Activated naive CD4-positive, alpha-beta T cell treated with anti-CD3 and anti-CD28 coated beads for 36 hours (primary cell): ENCODE measurements at regions of chr2 and their contacts with region 1.

Region 1: GRCh38 chr2:176096986-176097819 is 2.4 kb upstream of the HOXD12 start:
- DNase-seq: peak; percentile 70
- H3K4me3 Mint-ChIP-seq: peak overlapping the region; percentile 51
- H3K27ac Mint-ChIP-seq: no peak overlapping the region
- H3K4me1 Mint-ChIP-seq: peaks cover 22% of the 10 kb centered on the region
- H3K27me3 Mint-ChIP-seq: peaks cover 80% of the 10 kb centered on the region

Region 2: DNA sequence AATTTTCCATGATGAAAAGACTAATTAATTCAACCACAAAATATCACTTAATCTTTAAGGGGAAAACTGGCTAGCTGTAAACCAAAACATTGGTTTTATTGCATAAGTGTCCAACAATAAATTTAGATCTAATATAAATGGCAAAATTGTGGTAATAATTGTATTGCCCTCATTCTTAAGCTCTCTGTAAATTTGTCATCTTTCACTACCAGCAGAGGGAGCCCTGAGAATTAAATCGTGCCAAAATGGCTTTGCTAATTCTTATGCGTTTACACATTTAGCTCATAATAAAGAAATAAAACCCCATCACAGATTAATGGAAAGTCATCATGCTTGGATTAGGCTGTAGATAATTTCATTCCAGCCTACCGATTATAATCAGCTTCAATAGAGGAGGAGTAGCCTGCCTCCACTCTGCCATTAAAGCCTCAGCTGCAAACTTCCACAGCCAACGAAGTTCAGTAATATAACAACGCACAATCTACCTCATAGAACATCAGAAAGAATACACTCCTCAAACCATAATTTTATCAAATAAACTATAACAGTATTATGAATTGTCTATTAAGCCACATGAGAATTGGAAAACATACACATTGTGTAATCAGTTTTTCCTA is 845.7 kb before region 1 on chr2:
- CTCF ChIA-PET with region 1: interaction called, 14 read pairs
- intact Hi-C with region 1: loop called (anchors 2 kb)
- DNase-seq: peak; percentile 12
- H3K4me3 Mint-ChIP-seq: no peak overlapping the region
- H3K27ac Mint-ChIP-seq: no peak overlapping the region
- H3K4me1 Mint-ChIP-seq: no peaks in the 10 kb centered on the region
- H3K27me3 Mint-ChIP-seq: peaks cover 20% of the 10 kb centered on the region

Region 3: GRCh38 chr2:175366815-175367214 is 730.4 kb before region 1 on chr2:
- CTCF ChIA-PET with region 1: interaction called, 8 read pairs
- intact Hi-C with region 1: loop called (anchors 1 kb)
- DNase-seq: peak; percentile 35
- H3K4me3 Mint-ChIP-seq: no peak overlapping the region
- H3K27ac Mint-ChIP-seq: no peak overlapping the region
- H3K4me1 Mint-ChIP-seq: no peaks in the 10 kb centered on the region
- H3K27me3 Mint-ChIP-seq: peaks cover 20% of the 10 kb centered on the region

Region 4: GRCh38 chr2:175690113-175690837 is 406.9 kb before region 1 on chr2:
- CTCF ChIA-PET with region 1: interaction called, 49 read pairs
- intact Hi-C with region 1: loop called (anchors 1 kb)
- DNase-seq: peak; percentile 56
- H3K4me3 Mint-ChIP-seq: no peak overlapping the region
- H3K27ac Mint-ChIP-seq: no peak overlapping the region
- H3K4me1 Mint-ChIP-seq: no peaks in the 10 kb centered on the region
- H3K27me3 Mint-ChIP-seq: peaks cover 26% of the 10 kb centered on the region

Region 5: DNA sequence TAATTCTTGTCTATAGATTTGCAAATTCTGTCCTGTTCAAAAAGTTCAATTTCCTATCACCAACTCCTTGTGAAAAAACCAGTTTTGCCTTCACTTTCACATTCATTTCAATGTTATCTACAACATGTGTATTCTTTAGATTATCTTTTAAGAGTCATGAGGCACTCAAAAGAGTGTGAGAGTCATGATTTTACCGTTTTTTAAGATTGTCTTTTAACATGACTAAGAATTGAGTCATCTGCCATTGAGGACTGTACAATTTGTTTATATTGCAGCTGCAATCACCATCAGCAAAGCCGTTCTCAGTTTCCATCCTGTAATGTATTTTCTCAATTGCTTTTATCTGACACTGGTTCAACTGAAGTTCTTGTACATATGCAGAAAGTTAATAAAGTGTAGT is 371.0 kb before region 1 on chr2:
- CTCF ChIA-PET with region 1: no interaction called
- intact Hi-C with region 1: no loop called
- DNase-seq: no peak
- H3K4me3 Mint-ChIP-seq: no peak overlapping the region
- H3K27ac Mint-ChIP-seq: no peak overlapping the region
- H3K4me1 Mint-ChIP-seq: no peaks in the 10 kb centered on the region
- H3K27me3 Mint-ChIP-seq: no peaks in the 10 kb centered on the region

Region 6: DNA sequence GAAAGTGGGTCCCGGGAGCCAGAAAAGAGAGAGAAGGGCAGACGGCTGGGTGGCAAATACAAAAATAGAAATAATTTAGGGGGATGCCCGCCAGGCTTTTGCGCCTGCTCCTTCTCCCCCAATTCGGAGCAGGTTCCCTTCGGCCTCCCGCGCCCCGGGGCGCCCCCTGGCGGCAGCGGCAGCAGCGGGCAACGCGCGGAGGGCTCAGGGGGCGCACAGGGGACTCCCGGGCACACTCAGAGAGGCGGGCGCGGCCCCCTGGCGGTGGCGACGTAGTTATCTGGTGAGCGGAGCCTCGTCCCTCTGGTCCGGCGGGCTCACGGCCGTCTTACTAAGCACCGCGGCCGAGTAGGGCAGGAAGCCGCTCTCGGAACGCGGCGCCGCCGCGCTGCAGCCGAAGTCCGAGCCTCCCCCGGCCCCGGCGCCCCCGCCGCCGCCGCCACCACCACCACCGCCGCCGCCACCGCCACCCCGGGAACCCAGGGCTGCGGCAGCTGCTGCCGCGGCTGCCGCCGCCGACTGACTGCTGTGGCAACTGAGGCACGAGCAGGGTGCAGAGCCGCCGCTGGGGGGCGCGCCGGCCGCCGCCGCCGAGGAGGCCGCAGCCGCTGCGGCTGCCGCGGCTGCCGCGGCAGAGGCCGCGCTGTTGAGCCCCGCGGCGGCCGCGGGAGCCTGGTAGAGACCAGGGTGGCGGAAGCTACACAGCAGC is 17.2 kb before region 1 on chr2:
- CTCF ChIA-PET with region 1: interaction called, 7 read pairs
- intact Hi-C with region 1: loop called (anchors 2 kb)
- DNase-seq: no peak
- H3K4me3 Mint-ChIP-seq: peak overlapping the region; percentile 49
- H3K27ac Mint-ChIP-seq: no peak overlapping the region
- H3K4me1 Mint-ChIP-seq: peaks cover 17% of the 10 kb centered on the region
- H3K27me3 Mint-ChIP-seq: peaks cover 77% of the 10 kb centered on the region